ENCODE measurements at regions of chr15 and their contacts with region 1.

Region 1: GRCh38 chr15:99052205-99052604 is 44.6 kb upstream of the PGPEP1L start:
- DNase-seq: no peak
- ATAC-seq: no peak

Region 2: GRCh38 chr15:99014803-99015676 is 37.2 kb before region 1 on chr15:
- intact Hi-C with region 1: loop called in 1 of 2 experiments (anchors 5 kb)
- DNase-seq: peak; percentile 57
- ATAC-seq: peak; percentile 92 to 96

Measured in left cardiac atrium (tissue), 4 donors.